B cell (primary cell): ENCODE measurements at regions of chr7 and their contacts with region 1.

Region 1: DNA sequence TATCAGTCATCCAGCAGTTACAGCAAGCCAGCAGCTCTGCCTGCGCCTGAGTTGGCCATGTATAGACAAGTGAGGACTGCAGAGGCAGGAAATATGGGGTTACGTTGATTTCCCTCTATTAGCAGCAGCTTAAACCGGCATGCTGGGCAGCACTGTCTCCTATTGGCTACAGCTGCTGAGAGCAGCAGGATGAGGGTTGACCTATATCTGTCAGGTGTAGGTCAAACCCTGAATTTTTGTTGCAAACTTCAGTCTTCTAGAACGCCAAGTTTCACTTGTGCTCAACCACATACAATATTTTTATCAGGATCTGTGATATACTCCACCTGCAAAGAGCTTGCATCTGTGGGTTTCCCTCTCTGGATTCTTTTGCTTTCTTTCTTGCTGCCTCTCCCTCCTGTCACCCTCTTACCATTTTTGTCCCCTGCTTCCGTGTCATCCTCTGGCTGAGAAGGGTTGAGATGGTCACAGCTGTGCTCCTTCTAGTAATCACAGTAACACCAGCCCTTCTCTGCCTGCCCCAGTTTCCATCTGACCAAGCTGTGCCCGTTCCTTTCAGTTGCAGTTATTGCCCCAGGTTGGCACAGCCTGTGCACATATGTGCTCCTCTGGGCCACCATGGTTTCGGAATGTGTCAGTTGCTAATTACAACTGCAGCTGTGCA is 23.8 kb upstream of the GLCCI1 start:
- DNase-seq: peak; percentile 55
- ATAC-seq: peak; percentile 82
- H3K4me3 ChIP-seq: peak overlapping the region in 4 of 5 experiments; percentile 15 to 43 (median 32)
- H3K4me3 Mint-ChIP-seq: peak overlapping the region; percentile 85
- H3K27ac ChIP-seq: peak overlapping the region; percentile 65 to 73
- H3K27ac Mint-ChIP-seq: peak overlapping the region; percentile 83
- H3K4me1 ChIP-seq: peaks cover 15 to 21% of the 10 kb centered on the region in 2 donors
- H3K4me1 Mint-ChIP-seq: peaks cover 27% of the 10 kb centered on the region
- H3K27me3 ChIP-seq: no peaks in the 10 kb centered on the region
- H3K27me3 Mint-ChIP-seq: no peaks in the 10 kb centered on the region
- CTCF ChIP-seq: no peak

Region 2: GRCh38 chr7:7909376-7909775 is 35.4 kb before region 1 on chr7:
- CTCF ChIA-PET with region 1: interaction called, 3 read pairs
- POLR2A ChIA-PET with region 1: no interaction called
- intact Hi-C with region 1: loop called (anchors 5 kb)
- DNase-seq: no peak
- ATAC-seq: no peak
- H3K4me3 ChIP-seq: no peak overlapping the region
- H3K4me3 Mint-ChIP-seq: no peak overlapping the region
- H3K27ac ChIP-seq: no peak overlapping the region
- H3K27ac Mint-ChIP-seq: no peak overlapping the region
- H3K4me1 ChIP-seq: peaks cover 7% of the 10 kb centered on the region in 2 donors
- H3K4me1 Mint-ChIP-seq: peaks cover 17% of the 10 kb centered on the region
- H3K27me3 ChIP-seq: no peaks in the 10 kb centered on the region
- H3K27me3 Mint-ChIP-seq: no peaks in the 10 kb centered on the region
- CTCF ChIP-seq: no peak

Region 3: DNA sequence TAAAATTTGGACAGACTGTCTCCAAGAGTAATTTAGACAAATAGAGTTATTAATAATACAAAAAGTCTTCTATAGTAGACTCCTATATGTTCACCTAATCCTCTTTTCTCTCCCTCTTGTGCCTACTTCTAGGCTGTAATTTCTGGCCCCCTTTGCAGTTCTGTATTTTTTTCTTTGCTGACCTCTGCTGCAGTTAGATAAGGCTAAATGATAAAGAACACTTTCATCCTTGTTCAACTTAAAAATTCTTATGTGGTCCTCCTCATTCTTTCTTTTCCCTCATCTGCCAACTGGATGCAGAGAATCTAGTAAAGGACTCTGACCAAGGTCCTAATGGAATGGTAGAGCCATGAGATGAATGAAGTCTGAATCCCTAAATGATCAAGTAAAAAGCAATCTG is 44.0 kb after region 1 on chr7:
- CTCF ChIA-PET with region 1: no interaction called
- POLR2A ChIA-PET with region 1: no interaction called
- intact Hi-C with region 1: no loop called
- DNase-seq: no peak
- ATAC-seq: no peak
- H3K4me3 ChIP-seq: no peak overlapping the region
- H3K4me3 Mint-ChIP-seq: no peak overlapping the region
- H3K27ac ChIP-seq: no peak overlapping the region
- H3K27ac Mint-ChIP-seq: no peak overlapping the region
- H3K4me1 ChIP-seq: peaks cover 0 to 8% of the 10 kb centered on the region in 2 donors
- H3K4me1 Mint-ChIP-seq: peaks cover 44% of the 10 kb centered on the region
- H3K27me3 ChIP-seq: no peaks in the 10 kb centered on the region
- H3K27me3 Mint-ChIP-seq: no peaks in the 10 kb centered on the region
- CTCF ChIP-seq: no peak